Naive thymus-derived CD4-positive, alpha-beta T cell (primary cell): ENCODE measurements at regions of chr5 and their contacts with region 1.

Region 1: DNA sequence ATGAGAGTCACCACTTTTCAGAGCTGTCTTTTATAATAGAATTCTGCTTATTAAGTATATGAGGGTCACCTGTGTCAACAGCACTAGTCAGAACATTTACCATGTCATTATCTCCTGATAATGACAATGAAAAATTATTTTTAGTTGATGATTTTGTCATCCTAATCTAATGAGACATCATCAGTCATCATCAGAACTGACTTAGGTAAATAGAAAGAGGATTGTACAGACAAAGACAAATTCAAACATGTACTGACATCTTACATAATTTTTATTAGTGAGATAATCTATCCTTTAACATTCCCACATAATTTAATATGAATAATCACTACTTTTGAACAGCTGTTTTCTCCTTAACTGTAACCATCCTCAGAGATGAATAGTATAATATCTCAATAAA is 22.6 kb downstream of the CDH9 start:
- DNase-seq: no peak
- ATAC-seq: no peak
- H3K4me3 ChIP-seq: no peak overlapping the region
- H3K4me3 Mint-ChIP-seq: no peak overlapping the region
- H3K27ac ChIP-seq: no peak overlapping the region
- H3K27ac Mint-ChIP-seq: no peak overlapping the region
- H3K4me1 ChIP-seq: no peaks in the 10 kb centered on the region
- H3K4me1 Mint-ChIP-seq: no peaks in the 10 kb centered on the region
- H3K27me3 ChIP-seq: no peaks in the 10 kb centered on the region
- H3K27me3 Mint-ChIP-seq: no peaks in the 10 kb centered on the region

Region 2: GRCh38 chr5:26955161-26955560 is 60.6 kb before region 1 on chr5:
- CTCF ChIA-PET with region 1: no interaction called
- POLR2A ChIA-PET with region 1: no interaction called
- intact Hi-C with region 1: loop called in 1 of 2 experiments (anchors 2 kb)
- DNase-seq: no peak
- ATAC-seq: no peak
- H3K4me3 ChIP-seq: no peak overlapping the region
- H3K4me3 Mint-ChIP-seq: no peak overlapping the region
- H3K27ac ChIP-seq: no peak overlapping the region
- H3K27ac Mint-ChIP-seq: no peak overlapping the region
- H3K4me1 ChIP-seq: no peaks in the 10 kb centered on the region
- H3K4me1 Mint-ChIP-seq: no peaks in the 10 kb centered on the region
- H3K27me3 ChIP-seq: no peaks in the 10 kb centered on the region
- H3K27me3 Mint-ChIP-seq: no peaks in the 10 kb centered on the region